Heart right ventricle (tissue), 16 donors: ENCODE measurements at regions of chr11 and their contacts with region 1.

Region 1: GRCh38 chr11:50072226-50073112 is 39.8 kb downstream of the OR4C45 start:
- DNase-seq: no peak
- ATAC-seq: no peak
- H3K4me3 ChIP-seq: no peak overlapping the region
- H3K27ac ChIP-seq: no peak overlapping the region
- H3K4me1 ChIP-seq: no peaks in the 10 kb centered on the region
- H3K27me3 ChIP-seq: no peaks in the 10 kb centered on the region
- CTCF ChIP-seq: no peak

Region 2: DNA sequence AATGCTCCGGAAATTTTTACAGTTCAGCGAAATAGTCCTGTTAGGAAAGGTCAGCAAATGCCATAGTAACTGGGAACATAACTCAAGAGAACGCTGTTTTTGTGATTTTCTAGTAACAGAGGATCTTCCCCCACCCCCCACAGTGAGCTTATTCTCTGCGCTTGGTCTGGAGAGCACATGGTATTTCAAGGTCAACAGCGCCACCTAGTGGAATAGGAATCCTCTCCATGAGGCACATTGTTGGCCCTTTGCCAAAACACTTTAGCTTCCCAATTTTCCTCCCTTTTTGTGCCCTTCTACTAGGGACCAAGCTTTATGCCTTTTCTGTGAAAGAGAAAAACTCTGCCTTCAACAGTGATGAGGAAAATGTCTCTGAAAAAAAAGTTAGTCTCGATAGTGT is 76.9 kb before region 1 on chr11:
- intact Hi-C with region 1: loop called in 1 of 10 experiments (anchors 10 kb)
- DNase-seq: peak in 1 of 2 donors; percentile 44
- ATAC-seq: no peak
- H3K4me3 ChIP-seq: no peak overlapping the region
- H3K27ac ChIP-seq: no peak overlapping the region
- H3K4me1 ChIP-seq: no peaks in the 10 kb centered on the region
- H3K27me3 ChIP-seq: no peaks in the 10 kb centered on the region
- CTCF ChIP-seq: peak; percentile 21 to 61 (median 45)